ENCODE measurements at regions of chr1 and their contacts with region 1.

Region 1: GRCh38 chr1:44213222-44214112 is at the start of gene DMAP1:
- DNase-seq: peak; percentile 83
- H3K4me3 Mint-ChIP-seq: peak within 1 kb of the TSS; percentile 90
- H3K27ac Mint-ChIP-seq: peak within 1 kb of the TSS; percentile 91
- H3K4me1 Mint-ChIP-seq: peaks cover 39% of the 10 kb centered on the region
- H3K27me3 Mint-ChIP-seq: peaks cover 8% of the 10 kb centered on the region
- total RNA-seq, gene DMAP1: 37.4 and 38.1 TPM in 2 replicates

Region 2: GRCh38 chr1:43991476-43992231 is 221.8 kb before region 1 on chr1 and contains the start of gene CCDC24:
- intact Hi-C with region 1: no loop called
- DNase-seq: peak; percentile 74
- H3K4me3 Mint-ChIP-seq: peak within 1 kb of the TSS; percentile 91
- H3K27ac Mint-ChIP-seq: peak within 1 kb of the TSS; percentile 82
- H3K4me1 Mint-ChIP-seq: peaks cover 13% of the 10 kb centered on the region
- H3K27me3 Mint-ChIP-seq: no peaks in the 10 kb centered on the region
- total RNA-seq, gene CCDC24: 2.7 TPM in 2 replicates

Region 3: GRCh38 chr1:44251989-44252671 is 38.7 kb after region 1 on chr1:
- intact Hi-C with region 1: loop called (anchors 1 kb)
- DNase-seq: no peak
- H3K4me3 Mint-ChIP-seq: no peak overlapping the region
- H3K27ac Mint-ChIP-seq: no peak overlapping the region
- H3K4me1 Mint-ChIP-seq: no peaks in the 10 kb centered on the region
- H3K27me3 Mint-ChIP-seq: no peaks in the 10 kb centered on the region

Region 4: DNA sequence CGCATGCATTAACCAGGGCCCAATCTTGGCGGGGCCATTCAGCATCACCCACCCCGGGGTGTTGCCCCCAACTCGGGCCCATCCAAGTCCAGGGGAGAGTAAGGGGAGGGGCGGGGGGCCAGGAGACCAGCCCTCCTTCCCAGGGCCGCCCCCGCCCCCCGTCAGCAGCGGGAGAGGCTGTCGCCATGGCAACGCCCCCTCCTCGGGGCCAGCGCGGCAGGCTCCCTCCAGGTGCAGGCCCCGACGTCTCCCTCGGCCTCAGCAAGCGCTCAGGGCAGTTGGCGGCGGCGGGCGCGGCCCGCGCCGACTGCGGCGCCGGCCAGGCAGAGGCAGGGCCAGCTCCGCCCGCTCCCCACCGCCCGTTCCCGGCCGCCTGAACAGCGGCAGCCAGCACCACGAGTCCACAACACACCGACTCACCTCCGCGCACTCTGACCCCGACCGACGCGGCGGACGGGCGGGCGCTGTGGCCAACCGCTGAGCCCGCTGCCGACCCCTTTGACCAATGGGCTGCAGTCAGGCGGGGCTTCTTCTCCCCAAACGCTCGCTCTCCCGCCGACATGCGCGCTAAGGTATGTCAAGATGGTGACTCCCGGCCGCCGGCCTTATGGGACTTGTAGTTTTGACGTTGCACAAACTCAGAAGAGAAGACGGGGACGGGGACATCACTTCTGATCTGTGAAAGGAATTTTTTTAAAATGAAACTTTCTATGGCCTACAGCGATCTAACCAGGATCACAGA is 141.5 kb after region 1 on chr1 and contains the start of gene ERI3:
- intact Hi-C with region 1: loop called (anchors 1 kb)
- DNase-seq: peak; percentile 95
- H3K4me3 Mint-ChIP-seq: peak within 1 kb of the TSS; percentile 93
- H3K27ac Mint-ChIP-seq: peak within 1 kb of the TSS; percentile 88
- H3K4me1 Mint-ChIP-seq: peaks cover 34% of the 10 kb centered on the region
- H3K27me3 Mint-ChIP-seq: no peaks in the 10 kb centered on the region
- total RNA-seq, gene ERI3: 51.4 and 55.4 TPM in 2 replicates

Region 5: DNA sequence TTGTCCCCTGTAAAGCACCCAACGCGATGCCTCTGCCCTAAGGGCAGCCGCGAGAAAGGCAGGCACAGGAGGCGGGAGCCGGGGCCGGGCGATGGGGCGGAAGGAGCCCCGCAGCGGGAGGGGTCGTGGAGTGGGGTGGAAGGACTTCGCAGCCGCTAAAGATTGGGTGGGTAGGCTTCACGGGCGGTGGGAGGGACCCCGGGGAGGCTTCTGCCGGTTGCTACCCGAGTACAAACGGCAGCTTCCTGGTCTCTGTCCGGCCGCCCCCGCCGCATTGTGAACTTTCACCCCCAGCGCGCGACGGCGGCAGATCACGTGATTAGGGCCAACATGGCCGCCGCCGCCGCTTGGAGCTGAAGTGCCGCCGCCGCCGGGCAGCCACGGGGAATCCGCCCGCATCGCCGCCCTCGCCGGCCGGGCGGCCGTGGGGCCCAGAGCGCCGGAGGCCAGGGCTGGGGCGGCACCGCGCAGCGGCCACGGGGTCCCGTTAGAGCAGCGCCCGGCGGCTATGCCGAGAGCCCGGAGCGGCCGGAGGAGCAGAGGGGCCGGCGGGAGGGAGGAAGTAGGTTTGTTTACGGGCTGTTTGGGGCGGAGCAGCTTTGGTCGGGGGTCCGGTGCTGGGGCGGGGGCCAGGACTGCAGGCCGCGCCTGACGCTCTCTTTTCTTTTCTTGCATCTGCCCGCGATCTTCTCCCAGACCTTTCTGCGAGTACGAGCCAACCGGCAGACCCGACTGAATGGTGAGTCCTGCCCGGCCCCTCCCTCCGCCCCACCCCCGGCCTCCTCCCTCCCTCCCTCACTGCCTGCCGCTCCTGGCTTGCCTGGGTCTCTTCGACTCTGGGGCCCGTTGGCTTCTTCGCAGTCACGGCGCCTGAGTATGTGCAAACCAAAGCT is 418.4 kb after region 1 on chr1:
- intact Hi-C with region 1: loop called (anchors 10 kb)
- DNase-seq: peak; percentile 86
- H3K4me3 Mint-ChIP-seq: peak overlapping the region; percentile 91
- H3K27ac Mint-ChIP-seq: peak overlapping the region; percentile 97
- H3K4me1 Mint-ChIP-seq: peaks cover 40% of the 10 kb centered on the region
- H3K27me3 Mint-ChIP-seq: peaks cover 2% of the 10 kb centered on the region

Measured in activated T-helper 1 cell treated with anti-CD3 and anti-CD28 coated beads, Interleukin-12 subunit alpha, Interleukin-12 subunit beta, Interleukin-2, Interleukin-4 antibody, amounts not matched to agents 30 ng/mL and 10 ng/mL and 1 ng/mL, durations not matched to agents 14 hours and 24 hours and 36 hours (primary cell).